ENCODE measurements at regions of chr10 and their contacts with region 1.

Region 1: GRCh38 chr10:103605359-103606095 is 112.0 kb downstream of the NEURL1 start:
- DNase-seq: peak; percentile 33
- ATAC-seq: peak; percentile 39
- H3K4me3 ChIP-seq: no peak overlapping the region
- H3K27ac ChIP-seq: no peak overlapping the region
- H3K4me1 ChIP-seq: no peaks in the 10 kb centered on the region
- H3K27me3 ChIP-seq: no peaks in the 10 kb centered on the region
- CTCF ChIP-seq: peak; percentile 68
- EP300 ChIP-seq: no peak
- POLR2A ChIP-seq: no peak
- RAD21 ChIP-seq: no peak

Region 2: GRCh38 chr10:103507235-103508191 is 98.0 kb before region 1 on chr10:
- CTCF ChIA-PET with region 1: no interaction called
- POLR2A ChIA-PET with region 1: no interaction called
- in situ Hi-C with region 1: no loop called
- intact Hi-C with region 1: no loop called
- DNase-seq: no peak
- ATAC-seq: peak; percentile 36
- H3K4me3 ChIP-seq: no peak overlapping the region
- H3K27ac ChIP-seq: no peak overlapping the region
- H3K4me1 ChIP-seq: peaks cover 25% of the 10 kb centered on the region
- H3K27me3 ChIP-seq: peaks cover 4 to 59% of the 10 kb centered on the region in 2 experiments; a peak in 3 of 5 replicates
- CTCF ChIP-seq: peak; percentile 42
- EP300 ChIP-seq: no peak
- POLR2A ChIP-seq: no peak
- RAD21 ChIP-seq: no peak

Region 3: DNA sequence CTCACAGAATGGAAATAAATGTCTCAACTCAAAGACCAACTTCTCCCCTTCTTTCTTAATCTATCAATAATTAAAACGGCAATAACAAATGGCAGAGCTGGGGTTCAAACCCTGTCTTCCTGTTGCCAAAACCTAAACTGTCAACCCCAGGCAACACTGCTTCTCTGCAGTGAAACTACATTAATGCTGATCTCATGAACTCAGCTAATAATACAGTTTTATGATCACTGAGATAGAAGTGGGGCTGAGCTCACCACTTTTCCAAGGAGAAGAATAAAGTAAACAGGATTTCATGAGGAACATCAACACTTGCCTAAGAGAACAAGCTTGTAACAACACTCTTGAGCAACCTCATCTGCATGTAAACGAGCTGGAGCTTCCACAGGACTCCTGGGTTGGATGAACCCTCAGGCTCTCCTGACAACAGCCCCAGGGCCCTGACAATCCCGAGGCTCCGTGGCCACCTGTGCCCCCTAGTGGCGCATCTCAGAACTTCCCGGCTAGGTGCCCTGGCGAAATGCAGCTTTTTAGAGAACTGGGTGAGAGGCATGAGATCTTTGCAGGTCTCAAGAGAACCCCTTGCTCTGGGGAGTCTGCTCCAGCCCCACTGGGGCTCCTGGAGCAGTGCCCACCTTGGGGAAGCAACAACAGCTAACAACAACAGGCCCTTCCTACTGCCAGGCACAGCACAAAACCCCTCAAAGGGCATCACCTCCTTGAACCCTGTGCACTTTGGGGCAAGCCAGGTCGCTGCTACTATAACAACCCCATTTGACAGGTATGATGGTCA is 80.5 kb after region 1 on chr10:
- CTCF ChIA-PET with region 1: interaction called, 10 read pairs
- POLR2A ChIA-PET with region 1: no interaction called
- in situ Hi-C with region 1: no loop called
- intact Hi-C with region 1: loop called (anchors 1 kb)
- DNase-seq: peak; percentile 36
- ATAC-seq: peak; percentile 84
- H3K4me3 ChIP-seq: no peak overlapping the region
- H3K27ac ChIP-seq: no peak overlapping the region
- H3K4me1 ChIP-seq: no peaks in the 10 kb centered on the region
- H3K27me3 ChIP-seq: no peaks in the 10 kb centered on the region
- CTCF ChIP-seq: peak; percentile 92
- EP300 ChIP-seq: no peak
- POLR2A ChIP-seq: no peak
- RAD21 ChIP-seq: peak; percentile 73

Measured in HepG2 (cell line).